Pancreas (tissue), 10 donors: ENCODE measurements at regions of chr22 and their contacts with region 1.

Region 1: GRCh38 chr22:24516301-24516737 is 21.2 kb downstream of the UPB1 start:
- DNase-seq: peak in 1 of 6 donors; percentile 34
- ATAC-seq: peak in 1 of 4 donors; percentile 30
- H3K4me3 ChIP-seq: no peak overlapping the region
- H3K27ac ChIP-seq: no peak overlapping the region
- H3K4me1 ChIP-seq: peaks cover 0 to 19% (median 13%) of the 10 kb centered on the region in 3 donors
- H3K27me3 ChIP-seq: no peaks in the 10 kb centered on the region
- CTCF ChIP-seq: no peak

Region 2: GRCh38 chr22:24429411-24430365 is 86.6 kb before region 1 on chr22:
- intact Hi-C with region 1: loop called in 2 of 3 experiments (anchors 5 kb)
- DNase-seq: peak in 2 of 6 donors; percentile 60 to 86
- ATAC-seq: peak in 2 of 4 donors; percentile 4 to 54
- H3K4me3 ChIP-seq: no peak overlapping the region
- H3K27ac ChIP-seq: no peak overlapping the region
- H3K4me1 ChIP-seq: no peaks in the 10 kb centered on the region
- H3K27me3 ChIP-seq: no peaks in the 10 kb centered on the region
- CTCF ChIP-seq: no peak